ENCODE measurements at regions of chrX and their contacts with region 1.

Region 1: DNA sequence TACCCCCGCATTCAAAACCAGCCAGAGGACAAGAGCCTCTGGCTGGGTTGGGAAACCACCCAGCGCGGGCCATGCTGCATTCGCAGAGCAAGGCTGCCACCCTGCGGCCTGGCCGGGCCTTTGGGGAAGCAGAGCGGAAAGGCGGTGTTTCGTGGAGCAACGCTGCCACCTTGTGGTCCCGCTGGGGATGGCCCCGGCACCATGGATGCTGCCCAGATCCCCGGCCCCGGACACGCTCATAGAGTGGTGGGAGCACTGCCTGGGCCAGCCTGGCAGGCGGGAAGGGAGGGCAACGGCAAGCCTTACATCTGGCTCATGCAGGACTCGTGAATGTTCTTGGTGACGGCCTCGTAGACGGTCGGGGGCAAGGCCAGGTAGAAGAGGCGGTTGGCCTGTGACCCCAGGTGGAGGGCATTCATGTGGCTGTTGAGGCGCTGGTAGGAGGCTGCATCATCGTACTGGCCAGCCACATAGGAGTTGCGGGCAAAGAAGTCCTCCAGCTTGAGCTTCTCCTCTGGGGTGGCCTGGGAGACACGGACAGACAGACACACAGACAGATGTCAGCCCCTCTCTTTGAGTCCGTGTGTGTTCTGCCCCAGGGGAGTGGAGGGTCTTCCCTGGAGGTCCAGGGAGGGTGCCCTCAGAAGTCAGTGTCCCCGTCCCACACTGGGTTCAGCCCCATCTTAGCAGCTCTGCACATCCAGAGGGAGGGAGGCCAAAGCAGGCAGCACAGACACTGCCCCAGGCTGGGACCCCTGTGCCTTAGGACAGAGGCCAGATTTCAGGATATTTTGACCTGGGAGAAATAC is 11.6 kb downstream of the G6PD start:
- DNase-seq: peak in 1 of 2 donors; percentile 91
- H3K4me3 ChIP-seq: no peak overlapping the region
- H3K27ac ChIP-seq: peak overlapping the region; percentile 58
- H3K4me1 ChIP-seq: peaks cover 11% of the 10 kb centered on the region
- H3K27me3 ChIP-seq: no peaks in the 10 kb centered on the region
- CTCF ChIP-seq: peak; percentile 99 to 100 (median 100)
- POLR2A ChIP-seq: no peak

Region 2: GRCh38 chrX:154397819-154398724 is 137.0 kb before region 1 on chrX and contains the start of gene RPL10:
- intact Hi-C with region 1: loop called (anchors 5 kb)
- DNase-seq: peak in 1 of 2 donors; percentile 98
- H3K4me3 ChIP-seq: peak within 1 kb of the TSS; percentile 65 to 69
- H3K27ac ChIP-seq: peak within 1 kb of the TSS; percentile 88
- H3K4me1 ChIP-seq: peaks cover 21% of the 10 kb centered on the region
- H3K27me3 ChIP-seq: no peaks in the 10 kb centered on the region
- CTCF ChIP-seq: no peak
- POLR2A ChIP-seq: peak in 1 of 2 donors; percentile 79
- total RNA-seq, gene RPL10: 3,948 TPM

Region 3: GRCh38 chrX:154411322-154411980 is 123.6 kb before region 1 on chrX and contains the start of gene TAFAZZIN:
- intact Hi-C with region 1: loop called (anchors 5 kb)
- DNase-seq: peak in 1 of 2 donors; percentile 79
- H3K4me3 ChIP-seq: peak within 1 kb of the TSS; percentile 54 to 59
- H3K27ac ChIP-seq: peak within 1 kb of the TSS; percentile 85
- H3K4me1 ChIP-seq: peaks cover 10% of the 10 kb centered on the region
- H3K27me3 ChIP-seq: no peaks in the 10 kb centered on the region
- CTCF ChIP-seq: no peak
- POLR2A ChIP-seq: peak in 1 of 2 donors; percentile 52
- total RNA-seq, gene TAFAZZIN: 59.2 TPM

Region 4: DNA sequence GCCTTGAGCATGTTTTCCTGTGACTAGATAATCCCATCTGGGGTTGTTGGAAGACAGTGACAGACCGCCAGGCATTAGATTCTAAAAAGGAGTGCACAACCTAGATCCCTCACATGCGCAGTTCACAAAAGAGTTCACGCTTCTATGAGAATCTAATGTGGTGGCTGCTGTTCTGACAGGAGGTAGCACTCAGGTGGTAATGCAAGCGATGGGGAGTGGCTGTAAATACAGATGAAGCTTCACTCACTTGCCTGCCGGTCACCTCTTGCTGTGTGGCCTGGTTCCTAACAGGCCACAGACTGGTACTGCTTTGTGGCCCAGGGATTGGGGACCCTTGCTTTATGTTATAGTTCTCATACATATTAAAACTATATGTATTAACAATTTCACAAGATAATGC is 1159.6 kb after region 1 on chrX:
- intact Hi-C with region 1: no loop called
- DNase-seq: no peak
- H3K4me3 ChIP-seq: no peak overlapping the region
- H3K27ac ChIP-seq: no peak overlapping the region
- H3K4me1 ChIP-seq: no peaks in the 10 kb centered on the region
- H3K27me3 ChIP-seq: no peaks in the 10 kb centered on the region
- CTCF ChIP-seq: no peak
- POLR2A ChIP-seq: no peak